ENCODE measurements at regions of chr6 and their contacts with region 1.

Region 1: GRCh38 chr6:127855542-127856159 is 45.2 kb downstream of the THEMIS start:
- DNase-seq: peak; percentile 24
- ATAC-seq: peak; percentile 71
- H3K4me3 ChIP-seq: no peak overlapping the region
- H3K27ac ChIP-seq: no peak overlapping the region
- H3K4me1 ChIP-seq: no peaks in the 10 kb centered on the region
- H3K27me3 ChIP-seq: no peaks in the 10 kb centered on the region
- CTCF ChIP-seq: peak; percentile 68
- EP300 ChIP-seq: no peak
- POLR2A ChIP-seq: no peak
- RAD21 ChIP-seq: peak; percentile 41; the same call in 1 of the 2 replicates

Region 2: GRCh38 chr6:127630800-127631199 is 224.9 kb before region 1 on chr6:
- CTCF ChIA-PET with region 1: no interaction called
- POLR2A ChIA-PET with region 1: no interaction called
- in situ Hi-C with region 1: no loop called
- intact Hi-C with region 1: no loop called
- DNase-seq: no peak
- ATAC-seq: no peak
- H3K4me3 ChIP-seq: no peak overlapping the region
- H3K27ac ChIP-seq: no peak overlapping the region
- H3K4me1 ChIP-seq: no peaks in the 10 kb centered on the region
- H3K27me3 ChIP-seq: no peaks in the 10 kb centered on the region
- CTCF ChIP-seq: no peak
- EP300 ChIP-seq: no peak
- POLR2A ChIP-seq: no peak
- RAD21 ChIP-seq: no peak

Region 3: DNA sequence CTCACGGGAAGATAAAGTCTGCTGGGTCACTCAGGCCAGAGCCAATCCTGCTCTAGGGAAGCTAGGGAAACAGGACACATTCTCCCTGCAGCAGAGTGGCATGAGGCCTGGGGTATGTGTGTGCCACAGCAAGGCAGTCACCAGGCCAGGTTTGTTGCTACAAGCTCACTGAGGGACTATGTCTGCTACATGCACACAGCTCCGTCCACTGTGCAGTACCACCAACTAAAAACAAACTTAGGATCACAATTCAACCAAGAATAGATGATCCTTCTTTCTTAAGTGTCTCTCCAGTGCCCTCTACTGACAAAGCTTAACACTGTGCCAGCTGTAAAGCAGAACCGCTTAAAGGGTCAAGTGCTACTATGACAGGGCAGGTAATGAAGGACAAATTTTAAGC is 472.2 kb after region 1 on chr6:
- CTCF ChIA-PET with region 1: no interaction called
- POLR2A ChIA-PET with region 1: no interaction called
- in situ Hi-C with region 1: loop called (anchors 10 kb)
- intact Hi-C with region 1: loop called (anchors 10 kb)
- DNase-seq: peak; percentile 37
- ATAC-seq: peak; percentile 89
- H3K4me3 ChIP-seq: no peak overlapping the region
- H3K27ac ChIP-seq: no peak overlapping the region
- H3K4me1 ChIP-seq: no peaks in the 10 kb centered on the region
- H3K27me3 ChIP-seq: no peaks in the 10 kb centered on the region
- CTCF ChIP-seq: peak; percentile 79
- EP300 ChIP-seq: no peak
- POLR2A ChIP-seq: no peak
- RAD21 ChIP-seq: peak; percentile 47

Region 4: DNA sequence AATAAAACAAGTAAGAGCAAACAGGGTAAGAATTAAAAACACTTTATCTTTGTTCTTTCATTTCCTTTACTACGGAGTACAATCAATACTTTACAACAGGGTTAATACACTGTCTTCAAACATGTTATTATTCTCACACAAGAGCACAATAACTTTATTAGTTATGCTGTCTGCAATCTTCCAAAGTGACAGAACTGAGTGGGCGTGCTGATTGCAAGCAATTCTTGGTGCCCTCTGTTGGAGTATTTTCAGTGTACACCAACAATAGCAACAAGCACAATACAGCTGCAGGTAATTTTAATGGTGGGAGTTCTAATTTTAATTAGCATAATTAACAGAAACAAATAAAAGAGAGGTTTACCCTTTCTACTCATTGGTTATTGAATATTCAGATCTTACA is 698.7 kb after region 1 on chr6:
- CTCF ChIA-PET with region 1: no interaction called
- POLR2A ChIA-PET with region 1: no interaction called
- in situ Hi-C with region 1: no loop called
- intact Hi-C with region 1: loop called (anchors 1 kb)
- DNase-seq: peak; percentile 13
- ATAC-seq: peak; percentile 54; the same call in 2 of the 3 replicates
- H3K4me3 ChIP-seq: no peak overlapping the region
- H3K27ac ChIP-seq: no peak overlapping the region
- H3K4me1 ChIP-seq: no peaks in the 10 kb centered on the region
- H3K27me3 ChIP-seq: peaks cover 0 to 9% of the 10 kb centered on the region in 2 experiments; a peak in 2 of 5 replicates
- CTCF ChIP-seq: peak; percentile 39; the same call in 1 of the 2 replicates
- EP300 ChIP-seq: no peak
- POLR2A ChIP-seq: no peak
- RAD21 ChIP-seq: no peak

Region 5: DNA sequence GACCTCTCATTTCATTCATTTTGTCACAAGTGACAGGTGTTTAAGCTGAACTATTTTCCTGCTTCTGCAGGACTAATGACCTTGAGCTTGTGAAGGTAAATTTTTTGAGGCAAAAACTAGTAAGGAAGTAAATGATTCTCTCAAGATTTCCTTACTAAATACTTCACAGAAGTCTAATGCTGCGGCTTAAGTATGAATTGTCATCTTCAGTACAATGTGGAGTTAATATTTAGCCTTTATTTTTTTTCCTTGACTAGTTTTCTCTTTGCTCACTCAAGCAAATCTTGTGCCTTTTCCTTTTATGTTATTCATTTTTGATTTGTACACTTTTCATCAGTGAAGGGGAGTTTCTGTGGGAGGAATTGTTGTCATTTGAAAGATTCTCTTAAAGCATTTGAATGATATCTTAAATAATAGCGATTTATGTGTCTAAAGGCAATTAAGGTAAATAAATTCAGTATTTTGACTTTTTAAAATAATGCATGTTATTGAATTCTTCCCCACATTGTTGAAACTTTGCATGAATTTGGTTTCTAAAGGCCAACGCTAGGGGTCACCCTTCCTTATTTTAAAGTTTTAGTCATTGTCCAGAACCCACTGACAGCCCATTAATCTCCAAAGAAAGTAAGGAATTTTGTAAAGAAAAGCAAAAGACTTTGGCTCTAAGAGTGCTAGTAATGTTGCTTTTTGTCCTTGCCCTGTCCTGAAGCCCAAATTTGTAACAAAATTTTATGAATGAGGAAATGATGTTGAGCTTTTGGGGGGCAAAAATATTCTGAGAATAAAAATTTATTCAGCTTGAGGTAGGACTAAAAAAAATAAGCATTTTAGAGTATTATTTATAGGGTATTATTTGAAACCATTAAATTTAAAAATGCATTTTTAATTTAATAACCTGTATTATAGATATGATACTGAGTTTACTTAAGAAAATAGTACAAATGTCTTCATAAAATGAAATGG is 869.9 kb after region 1 on chr6:
- CTCF ChIA-PET with region 1: interaction called, 9 read pairs
- POLR2A ChIA-PET with region 1: no interaction called
- in situ Hi-C with region 1: loop called (anchors 10 kb)
- intact Hi-C with region 1: no loop called
- DNase-seq: peak; percentile 39
- ATAC-seq: peak; percentile 52; the same call in 1 of the 3 replicates
- H3K4me3 ChIP-seq: no peak overlapping the region
- H3K27ac ChIP-seq: no peak overlapping the region
- H3K4me1 ChIP-seq: no peaks in the 10 kb centered on the region
- H3K27me3 ChIP-seq: no peaks in the 10 kb centered on the region
- CTCF ChIP-seq: peak; percentile 59
- EP300 ChIP-seq: no peak
- POLR2A ChIP-seq: no peak
- RAD21 ChIP-seq: no peak

Region 6: GRCh38 chr6:128731249-128732165 is 875.9 kb after region 1 on chr6:
- CTCF ChIA-PET with region 1: interaction called, 9 read pairs
- POLR2A ChIA-PET with region 1: no interaction called
- in situ Hi-C with region 1: loop called (anchors 10 kb)
- intact Hi-C with region 1: loop called (anchors 1 kb)
- DNase-seq: peak; percentile 56
- ATAC-seq: peak; percentile 90
- H3K4me3 ChIP-seq: no peak overlapping the region
- H3K27ac ChIP-seq: no peak overlapping the region
- H3K4me1 ChIP-seq: no peaks in the 10 kb centered on the region
- H3K27me3 ChIP-seq: no peaks in the 10 kb centered on the region
- CTCF ChIP-seq: peak; percentile 79
- EP300 ChIP-seq: no peak
- POLR2A ChIP-seq: no peak
- RAD21 ChIP-seq: peak; percentile 63

Region 7: DNA sequence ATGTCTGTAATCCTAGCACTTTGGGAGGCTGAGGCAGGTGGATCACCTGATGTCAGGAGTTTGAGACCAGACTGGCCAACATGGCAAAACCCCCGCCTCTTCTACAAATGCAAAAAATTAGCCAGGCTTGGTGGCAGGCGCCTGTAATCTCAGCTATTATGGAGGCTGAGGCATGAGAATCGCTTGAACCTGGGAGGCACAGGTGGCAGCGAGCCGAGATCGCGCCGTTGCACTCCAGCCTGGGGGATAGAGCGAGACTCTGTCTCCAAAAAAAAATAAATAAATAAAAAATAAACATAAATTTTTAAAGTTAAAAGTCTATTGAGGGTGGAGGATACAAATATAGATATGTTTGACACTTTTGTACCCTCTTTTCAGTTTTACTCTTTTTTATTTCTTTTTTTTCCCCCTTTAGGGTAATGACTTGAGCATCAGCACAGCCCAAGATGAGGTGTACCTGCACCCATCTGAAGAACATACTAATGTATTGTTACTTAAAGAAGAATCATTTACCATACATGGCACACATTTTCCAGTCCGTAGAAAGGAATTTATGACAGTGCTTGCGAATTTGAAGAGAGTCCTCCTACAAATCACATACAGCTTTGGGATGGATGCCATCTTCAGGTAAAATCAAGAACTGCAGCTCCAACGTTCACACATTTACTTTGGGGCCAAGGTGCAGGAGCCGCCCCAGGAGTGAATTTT is 1396.2 kb after region 1 on chr6:
- CTCF ChIA-PET with region 1: no interaction called
- POLR2A ChIA-PET with region 1: no interaction called
- in situ Hi-C with region 1: no loop called
- intact Hi-C with region 1: loop called (anchors 10 kb)
- DNase-seq: peak; percentile 63
- ATAC-seq: peak; percentile 93
- H3K4me3 ChIP-seq: no peak overlapping the region
- H3K27ac ChIP-seq: no peak overlapping the region
- H3K4me1 ChIP-seq: no peaks in the 10 kb centered on the region
- H3K27me3 ChIP-seq: no peaks in the 10 kb centered on the region
- CTCF ChIP-seq: peak; percentile 85
- EP300 ChIP-seq: no peak
- POLR2A ChIP-seq: no peak
- RAD21 ChIP-seq: peak; percentile 69; the same call in 1 of the 2 replicates